Mammary epithelial cell (primary cell): ENCODE measurements at regions of chr4 and their contacts with region 1.

Region 1: GRCh38 chr4:8198906-8199593 is at the start of gene SH3TC1:
- DNase-seq: peak; percentile 94
- H3K4me3 ChIP-seq: peak within 1 kb of the TSS; percentile 67 to 85 (median 84)
- H3K27ac ChIP-seq: peak within 1 kb of the TSS; percentile 93
- H3K4me1 ChIP-seq: peaks cover 53% of the 10 kb centered on the region
- H3K27me3 ChIP-seq: no peaks in the 10 kb centered on the region
- CTCF ChIP-seq: no peak
- total RNA-seq, gene SH3TC1: 70.8 to 138 TPM

Region 2: GRCh38 chr4:8228319-8229250 is 29.5 kb after region 1 on chr4:
- CTCF ChIA-PET with region 1: no interaction called
- dilution Hi-C with region 1: no loop called
- in situ Hi-C with region 1: no loop called
- intact Hi-C with region 1: loop called (anchors 2 kb)
- DNase-seq: peak; percentile 95
- H3K4me3 ChIP-seq: no peak overlapping the region
- H3K27ac ChIP-seq: peak overlapping the region; percentile 54
- H3K4me1 ChIP-seq: peaks cover 19% of the 10 kb centered on the region
- H3K27me3 ChIP-seq: no peaks in the 10 kb centered on the region
- CTCF ChIP-seq: peak in 1 of 2 donors; percentile 7